Activated CD8-positive, alpha-beta T cell treated with anti-CD3 and anti-CD28 coated beads for 36 hours (primary cell): ENCODE measurements at regions of chr11 and their contacts with region 1.

Region 1: GRCh38 chr11:42296910-42297309 is 837.5 kb upstream of the LRRC4C start:
- DNase-seq: no peak
- ATAC-seq: no peak
- H3K4me3 Mint-ChIP-seq: no peak overlapping the region
- H3K27ac Mint-ChIP-seq: no peak overlapping the region
- H3K4me1 Mint-ChIP-seq: no peaks in the 10 kb centered on the region
- H3K27me3 Mint-ChIP-seq: no peaks in the 10 kb centered on the region
- CTCF ChIP-seq: no peak

Region 2: DNA sequence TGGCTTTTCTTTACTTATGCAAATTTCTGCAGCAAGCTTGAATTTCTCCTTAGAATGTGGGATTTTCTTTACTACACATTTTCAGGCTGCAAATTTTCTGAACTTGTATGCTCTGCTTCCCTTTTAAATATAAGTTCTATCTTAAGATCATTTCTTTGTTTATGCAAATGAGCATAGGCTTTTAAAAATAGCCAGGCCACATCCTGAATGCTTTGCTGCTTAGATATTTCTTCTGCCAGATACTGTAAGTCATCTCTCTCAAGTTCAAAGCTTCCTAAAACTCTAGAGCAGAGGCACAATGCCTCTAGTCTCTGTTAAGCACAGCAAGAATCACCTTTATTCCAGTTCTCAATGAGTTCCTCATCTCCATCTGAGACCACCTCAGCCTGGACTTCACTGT is 151.6 kb before region 1 on chr11:
- CTCF ChIA-PET with region 1: no interaction called
- POLR2A ChIA-PET with region 1: no interaction called
- intact Hi-C with region 1: no loop called
- DNase-seq: no peak
- ATAC-seq: no peak
- H3K4me3 Mint-ChIP-seq: no peak overlapping the region
- H3K27ac Mint-ChIP-seq: no peak overlapping the region
- H3K4me1 Mint-ChIP-seq: no peaks in the 10 kb centered on the region
- H3K27me3 Mint-ChIP-seq: no peaks in the 10 kb centered on the region
- CTCF ChIP-seq: no peak

Region 3: DNA sequence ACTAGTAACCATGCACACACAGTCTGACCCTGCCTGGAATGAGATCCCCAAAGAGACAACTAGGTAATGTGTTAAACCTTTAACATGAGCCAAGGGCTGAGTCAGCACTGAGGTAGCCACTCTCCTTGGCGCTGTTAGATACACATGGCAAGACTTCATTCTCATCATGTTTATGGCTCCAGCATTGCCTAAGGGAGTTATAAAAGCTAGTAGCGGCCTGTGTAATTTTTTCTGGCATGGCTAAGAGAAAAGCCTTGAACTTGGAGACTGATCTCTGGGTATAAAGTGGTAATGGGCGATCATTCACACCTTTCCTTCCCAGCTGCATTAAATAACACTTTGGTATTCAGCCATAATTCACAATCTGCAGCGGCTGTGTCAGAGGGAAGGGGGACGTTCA is 57.7 kb before region 1 on chr11:
- CTCF ChIA-PET with region 1: no interaction called
- POLR2A ChIA-PET with region 1: no interaction called
- intact Hi-C with region 1: loop called (anchors 10 kb)
- DNase-seq: no peak
- ATAC-seq: no peak
- H3K4me3 Mint-ChIP-seq: no peak overlapping the region
- H3K27ac Mint-ChIP-seq: no peak overlapping the region
- H3K4me1 Mint-ChIP-seq: no peaks in the 10 kb centered on the region
- H3K27me3 Mint-ChIP-seq: no peaks in the 10 kb centered on the region
- CTCF ChIP-seq: no peak

Region 4: GRCh38 chr11:42265073-42265472 is 31.8 kb before region 1 on chr11:
- CTCF ChIA-PET with region 1: no interaction called
- POLR2A ChIA-PET with region 1: no interaction called
- intact Hi-C with region 1: no loop called
- DNase-seq: no peak
- ATAC-seq: no peak
- H3K4me3 Mint-ChIP-seq: no peak overlapping the region
- H3K27ac Mint-ChIP-seq: no peak overlapping the region
- H3K4me1 Mint-ChIP-seq: no peaks in the 10 kb centered on the region
- H3K27me3 Mint-ChIP-seq: no peaks in the 10 kb centered on the region
- CTCF ChIP-seq: no peak